ENCODE measurements at regions of chr10 and their contacts with region 1.

Region 1: DNA sequence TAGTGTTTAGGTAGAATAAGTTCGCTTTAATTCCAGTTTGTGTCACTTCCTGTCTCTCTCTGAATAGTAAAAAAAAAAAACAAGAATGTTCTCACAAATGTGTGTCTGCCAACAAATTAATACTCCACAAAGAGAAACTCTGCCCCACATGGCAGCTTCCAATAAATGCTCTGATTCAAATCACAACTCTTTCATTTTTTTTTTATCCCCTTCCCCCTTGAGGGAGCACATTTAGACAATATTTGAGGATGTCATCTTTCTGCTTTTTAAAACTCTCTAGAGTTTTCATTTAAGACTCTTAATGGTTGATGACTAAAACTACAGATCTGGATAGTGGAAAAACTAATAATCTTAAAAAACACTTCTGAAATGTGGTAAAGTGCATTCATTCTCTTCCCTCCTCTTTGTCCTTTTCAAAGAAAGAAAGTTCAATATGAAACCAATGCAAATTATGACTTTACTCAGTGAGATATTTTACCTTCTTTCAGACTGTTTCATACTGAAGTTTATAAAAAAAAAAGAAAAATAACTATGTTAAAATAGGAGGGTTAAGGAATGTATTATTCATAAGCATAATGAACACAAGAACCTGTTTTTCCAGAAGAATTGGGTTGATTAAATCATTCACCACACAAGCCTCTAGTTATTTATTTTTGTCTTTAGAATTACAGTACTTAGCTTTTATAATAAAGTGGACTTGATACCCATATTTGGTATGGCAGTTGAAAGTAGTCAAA is 42.3 kb downstream of the ARID5B start:
- DNase-seq: no peak
- ATAC-seq: peak; percentile 65
- H3K4me3 Mint-ChIP-seq: peak overlapping the region; percentile 44
- H3K27ac Mint-ChIP-seq: peak overlapping the region; percentile 91
- H3K4me1 Mint-ChIP-seq: peaks cover 66% of the 10 kb centered on the region
- H3K27me3 Mint-ChIP-seq: no peaks in the 10 kb centered on the region
- CTCF ChIP-seq: no peak

Region 2: DNA sequence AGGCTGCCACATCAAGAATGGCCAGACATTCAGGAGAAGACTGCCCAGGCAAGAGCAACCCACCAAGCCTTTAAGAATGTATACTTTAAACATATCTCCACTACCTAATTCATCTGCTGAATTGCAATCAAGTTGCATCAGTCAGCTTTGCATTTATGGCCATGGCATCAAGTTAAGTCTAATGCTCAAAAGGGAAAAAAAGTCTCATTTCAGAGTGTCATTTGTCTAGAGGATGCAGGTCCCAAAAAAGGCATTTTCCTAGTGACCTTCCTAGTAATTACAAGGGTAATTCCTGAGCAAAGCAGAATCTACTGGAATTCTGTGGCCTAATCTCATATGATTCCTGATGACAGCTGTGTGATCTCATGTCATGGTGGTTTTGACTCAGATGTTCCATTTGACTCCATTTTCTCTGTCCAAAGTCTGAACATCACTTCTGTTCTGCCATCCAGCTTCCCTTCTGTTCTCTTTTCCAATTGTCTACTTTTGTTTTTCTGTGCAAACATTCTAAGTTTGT is 288.4 kb before region 1 on chr10:
- CTCF ChIA-PET with region 1: no interaction called
- POLR2A ChIA-PET with region 1: no interaction called
- intact Hi-C with region 1: no loop called
- DNase-seq: no peak
- ATAC-seq: no peak
- H3K4me3 Mint-ChIP-seq: no peak overlapping the region
- H3K27ac Mint-ChIP-seq: no peak overlapping the region
- H3K4me1 Mint-ChIP-seq: no peaks in the 10 kb centered on the region
- H3K27me3 Mint-ChIP-seq: peaks cover 27% of the 10 kb centered on the region
- CTCF ChIP-seq: no peak

Region 3: GRCh38 chr10:61822781-61823230 is 121.0 kb before region 1 on chr10:
- CTCF ChIA-PET with region 1: no interaction called
- POLR2A ChIA-PET with region 1: no interaction called
- intact Hi-C with region 1: no loop called
- DNase-seq: no peak
- ATAC-seq: no peak
- H3K4me3 Mint-ChIP-seq: no peak overlapping the region
- H3K27ac Mint-ChIP-seq: no peak overlapping the region
- H3K4me1 Mint-ChIP-seq: no peaks in the 10 kb centered on the region
- H3K27me3 Mint-ChIP-seq: no peaks in the 10 kb centered on the region
- CTCF ChIP-seq: no peak

Region 4: DNA sequence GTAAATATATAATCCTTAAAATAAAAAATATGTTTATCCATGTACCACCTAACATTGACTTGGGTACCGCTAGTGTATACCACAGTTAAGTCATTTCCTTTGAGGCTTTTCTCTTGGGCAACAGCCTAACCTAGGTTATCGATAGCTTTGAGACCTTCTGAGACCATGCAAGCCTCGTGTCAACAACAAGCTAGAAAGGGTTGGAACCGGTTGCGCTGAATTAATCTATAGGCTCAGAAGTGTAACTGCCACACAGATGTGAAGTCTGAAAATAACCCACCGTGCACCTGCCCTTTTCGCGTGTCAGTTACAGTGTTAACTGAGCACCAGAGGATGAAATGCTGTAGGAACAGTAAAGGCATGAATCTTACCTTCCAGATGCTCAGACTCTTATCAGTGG is 17.4 kb after region 1 on chr10:
- CTCF ChIA-PET with region 1: no interaction called
- POLR2A ChIA-PET with region 1: interaction called, 36 read pairs
- intact Hi-C with region 1: loop called (anchors 1 kb)
- DNase-seq: no peak
- ATAC-seq: peak; percentile 52
- H3K4me3 Mint-ChIP-seq: peak overlapping the region; percentile 35
- H3K27ac Mint-ChIP-seq: peak overlapping the region; percentile 88
- H3K4me1 Mint-ChIP-seq: peaks cover 87% of the 10 kb centered on the region
- H3K27me3 Mint-ChIP-seq: no peaks in the 10 kb centered on the region
- CTCF ChIP-seq: no peak

Region 5: DNA sequence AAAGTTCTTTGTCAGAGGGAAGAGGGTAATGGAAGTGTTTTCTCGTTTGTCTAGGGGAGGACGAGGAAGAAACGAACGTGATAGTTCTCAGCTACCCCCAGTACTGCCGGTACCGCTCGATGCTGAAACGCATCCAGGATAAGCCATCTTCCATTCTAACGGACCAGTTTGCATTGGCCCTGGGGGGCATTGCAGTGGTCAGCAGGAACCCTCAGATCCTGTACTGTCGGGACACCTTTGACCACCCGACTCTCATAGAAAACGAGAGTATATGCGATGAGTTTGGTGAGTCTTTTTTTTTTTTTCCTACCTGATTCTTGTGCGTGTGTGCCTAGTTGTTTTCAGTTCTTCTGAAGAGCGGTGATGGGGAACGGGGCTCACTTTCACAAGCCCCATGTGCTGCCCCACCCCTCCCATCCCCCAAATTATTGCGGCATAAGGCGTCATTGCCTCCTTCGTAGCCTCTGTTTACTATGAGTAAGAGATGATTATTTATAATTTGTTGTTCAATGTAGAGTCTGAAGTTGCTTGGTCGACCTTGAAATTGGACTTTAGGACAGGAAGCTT is 56.3 kb after region 1 on chr10:
- CTCF ChIA-PET with region 1: interaction called, 4 read pairs
- POLR2A ChIA-PET with region 1: interaction called, 18 read pairs
- intact Hi-C with region 1: loop called (anchors 1 kb)
- DNase-seq: peak; percentile 60
- ATAC-seq: peak; percentile 86
- H3K4me3 Mint-ChIP-seq: peak overlapping the region; percentile 77
- H3K27ac Mint-ChIP-seq: peak overlapping the region; percentile 100
- H3K4me1 Mint-ChIP-seq: peaks cover 95% of the 10 kb centered on the region
- H3K27me3 Mint-ChIP-seq: no peaks in the 10 kb centered on the region
- CTCF ChIP-seq: no peak

Region 6: GRCh38 chr10:62016623-62017490 is 73.0 kb after region 1 on chr10:
- CTCF ChIA-PET with region 1: interaction called, 4 read pairs
- POLR2A ChIA-PET with region 1: interaction called, 30 read pairs
- intact Hi-C with region 1: loop called (anchors 1 kb)
- DNase-seq: peak; percentile 40
- ATAC-seq: peak; percentile 65
- H3K4me3 Mint-ChIP-seq: peak overlapping the region; percentile 66
- H3K27ac Mint-ChIP-seq: peak overlapping the region; percentile 96
- H3K4me1 Mint-ChIP-seq: peaks cover 84% of the 10 kb centered on the region
- H3K27me3 Mint-ChIP-seq: no peaks in the 10 kb centered on the region
- CTCF ChIP-seq: no peak

Region 7: DNA sequence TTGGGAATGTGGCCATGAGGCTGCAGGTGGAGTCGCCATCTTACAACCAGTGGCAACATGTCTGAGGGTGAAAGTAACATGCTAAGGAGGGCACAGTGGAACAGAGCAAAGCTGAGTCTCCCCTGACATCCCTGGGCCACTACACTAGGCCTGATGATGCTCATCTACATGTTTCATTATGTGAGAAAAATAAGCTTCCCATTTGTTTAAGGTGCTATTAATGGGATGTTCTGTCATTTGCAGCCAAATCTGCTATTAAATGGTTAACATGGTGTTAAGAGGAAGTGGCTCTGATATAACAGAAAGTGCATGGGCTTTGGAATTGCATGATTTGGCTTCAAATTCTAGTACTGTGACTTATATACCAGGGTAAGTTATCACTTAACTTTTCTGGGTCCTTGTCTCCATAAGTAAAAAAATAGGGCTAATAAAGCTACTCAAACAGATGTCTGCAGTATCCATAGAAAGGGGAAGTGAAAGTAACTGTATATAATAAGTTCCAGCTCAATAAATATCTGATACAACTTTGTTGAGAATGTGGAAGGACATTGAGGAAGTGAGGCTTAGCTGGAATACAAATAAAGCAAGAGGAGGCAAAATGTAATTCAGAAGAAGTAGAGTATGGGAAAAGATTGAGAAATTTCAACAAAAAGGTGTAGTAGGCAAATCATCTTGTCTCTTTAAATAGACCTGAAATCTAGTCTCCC is 165.9 kb after region 1 on chr10:
- CTCF ChIA-PET with region 1: no interaction called
- POLR2A ChIA-PET with region 1: interaction called, 4 read pairs
- intact Hi-C with region 1: loop called (anchors 5 kb)
- DNase-seq: no peak
- ATAC-seq: peak; percentile 72
- H3K4me3 Mint-ChIP-seq: peak overlapping the region; percentile 58
- H3K27ac Mint-ChIP-seq: peak overlapping the region; percentile 87
- H3K4me1 Mint-ChIP-seq: peaks cover 70% of the 10 kb centered on the region
- H3K27me3 Mint-ChIP-seq: no peaks in the 10 kb centered on the region
- CTCF ChIP-seq: no peak